Prostate gland (tissue), 2 donors: ENCODE measurements at regions of chr9 and their contacts with region 1.

Region 1: DNA sequence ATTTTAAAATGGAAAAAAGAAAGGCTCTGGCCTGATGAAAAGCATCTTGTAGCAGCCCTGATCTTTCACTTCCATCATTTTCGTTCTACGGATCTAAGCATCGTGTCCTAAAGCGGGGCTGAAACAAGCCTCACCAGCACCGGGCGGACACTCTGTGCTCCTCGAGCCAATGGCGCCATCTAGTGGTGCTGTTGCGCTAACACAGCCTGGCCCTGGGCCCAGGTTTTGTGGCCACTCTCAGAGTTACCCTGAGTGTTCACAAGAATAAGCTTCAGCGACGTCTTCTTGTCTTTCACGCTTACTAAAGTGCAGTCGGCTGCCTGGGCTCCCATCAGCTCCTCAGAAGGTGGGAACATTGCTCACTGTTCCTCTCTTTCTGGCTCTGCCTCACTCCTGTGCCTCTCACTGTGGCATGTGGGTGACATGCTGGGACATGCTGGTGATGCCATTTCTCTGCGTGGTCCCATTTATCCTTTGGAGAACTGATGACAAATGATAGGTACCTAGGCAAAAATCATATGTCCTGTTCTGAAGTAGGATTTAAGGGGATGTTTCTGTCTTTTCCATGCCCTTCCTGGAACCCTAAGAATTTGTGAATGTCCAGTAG is 32.7 kb downstream of the DMRT3 start:
- DNase-seq: peak; percentile 70
- H3K4me3 ChIP-seq: no peak overlapping the region
- H3K27ac ChIP-seq: no peak overlapping the region
- H3K4me1 ChIP-seq: no peaks in the 10 kb centered on the region
- H3K27me3 ChIP-seq: no peaks in the 10 kb centered on the region
- CTCF ChIP-seq: peak; percentile 83 to 93 (median 88)
- POLR2A ChIP-seq: no peak

Region 2: GRCh38 chr9:385818-386398 is 623.3 kb before region 1 on chr9:
- intact Hi-C with region 1: loop called (anchors 10 kb)
- DNase-seq: peak; percentile 48
- H3K4me3 ChIP-seq: no peak overlapping the region
- H3K27ac ChIP-seq: no peak overlapping the region
- H3K4me1 ChIP-seq: no peaks in the 10 kb centered on the region
- H3K27me3 ChIP-seq: no peaks in the 10 kb centered on the region
- CTCF ChIP-seq: peak; percentile 78 to 92 (median 86)
- POLR2A ChIP-seq: no peak

Region 3: GRCh38 chr9:607417-607816 is 401.8 kb before region 1 on chr9:
- intact Hi-C with region 1: loop called (anchors 10 kb)
- DNase-seq: peak; percentile 68
- H3K4me3 ChIP-seq: no peak overlapping the region
- H3K27ac ChIP-seq: no peak overlapping the region
- H3K4me1 ChIP-seq: no peaks in the 10 kb centered on the region
- H3K27me3 ChIP-seq: no peaks in the 10 kb centered on the region
- CTCF ChIP-seq: no peak
- POLR2A ChIP-seq: no peak

Region 4: GRCh38 chr9:893843-894420 is 115.3 kb before region 1 on chr9:
- intact Hi-C with region 1: loop called (anchors 10 kb)
- DNase-seq: peak; percentile 49
- H3K4me3 ChIP-seq: no peak overlapping the region
- H3K27ac ChIP-seq: no peak overlapping the region
- H3K4me1 ChIP-seq: no peaks in the 10 kb centered on the region
- H3K27me3 ChIP-seq: no peaks in the 10 kb centered on the region
- CTCF ChIP-seq: peak; percentile 56 to 84 (median 82)
- POLR2A ChIP-seq: no peak